Activated CD4-positive, alpha-beta memory T cell treated with anti-CD3 and anti-CD28 coated beads, Interleukin-2, amount 10 ng/mL, durations not matched to agents 7 days and 5 days (primary cell): ENCODE measurements at regions of chr3 and their contacts with region 1.

Region 1: DNA sequence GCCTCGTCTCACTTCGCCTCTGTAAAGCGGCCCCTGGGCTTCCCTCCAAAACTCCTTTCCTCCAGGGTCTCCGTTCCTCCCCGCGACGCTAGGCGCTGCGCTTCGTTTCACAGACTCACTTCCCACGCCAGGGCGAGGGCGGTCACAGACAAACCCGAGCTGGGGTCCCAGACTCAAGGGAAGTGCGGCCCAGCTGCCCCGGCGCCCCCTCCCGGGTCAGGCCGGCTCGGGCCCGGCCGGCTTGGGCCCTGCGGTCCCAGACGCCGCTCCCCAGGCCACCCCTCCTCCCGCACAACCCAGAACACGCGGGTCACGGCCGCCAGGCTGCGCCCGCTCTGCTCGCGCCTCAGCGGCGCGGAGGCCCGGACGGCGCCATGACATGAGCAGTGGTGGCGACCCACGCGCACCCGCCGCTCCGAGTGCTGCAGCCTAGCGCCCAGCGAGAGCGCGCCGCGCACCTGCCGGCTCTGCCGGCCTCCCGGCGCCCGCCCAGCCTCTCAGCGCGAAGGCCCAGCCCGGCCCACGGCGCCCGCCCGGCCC is 547 bp downstream of the NUP210 start:
- DNase-seq: peak; percentile 60
- H3K4me3 Mint-ChIP-seq: peak overlapping the region; percentile 85
- H3K27ac Mint-ChIP-seq: peak overlapping the region; percentile 97
- H3K4me1 Mint-ChIP-seq: peaks cover 59% of the 10 kb centered on the region
- H3K27me3 Mint-ChIP-seq: no peaks in the 10 kb centered on the region

Region 2: GRCh38 chr3:13274551-13275332 is 144.8 kb before region 1 on chr3:
- CTCF ChIA-PET with region 1: no interaction called
- POLR2A ChIA-PET with region 1: no interaction called
- DNase-seq: no peak
- H3K4me3 Mint-ChIP-seq: no peak overlapping the region
- H3K27ac Mint-ChIP-seq: no peak overlapping the region
- H3K4me1 Mint-ChIP-seq: no peaks in the 10 kb centered on the region
- H3K27me3 Mint-ChIP-seq: peaks cover 27% of the 10 kb centered on the region

Region 3: DNA sequence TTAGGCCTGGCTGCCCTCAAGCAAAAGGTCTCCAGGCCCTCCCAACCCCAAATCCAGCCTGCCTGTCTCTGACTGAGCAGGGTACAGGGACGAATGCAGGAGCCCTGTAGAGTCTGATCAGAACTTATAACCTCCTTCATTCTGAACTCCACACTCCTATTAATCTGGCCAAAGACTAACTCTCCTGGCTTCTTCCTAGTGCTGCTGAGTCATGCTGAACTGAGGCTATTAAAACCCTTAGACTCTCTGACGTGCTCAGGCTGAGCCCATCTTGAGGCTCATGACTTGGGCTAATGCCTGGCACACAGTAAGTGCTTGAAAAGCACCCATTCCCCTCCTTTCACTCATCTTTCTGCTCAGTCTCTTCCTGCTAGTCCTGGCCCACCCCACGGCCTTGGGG is 81.3 kb before region 1 on chr3:
- CTCF ChIA-PET with region 1: no interaction called
- POLR2A ChIA-PET with region 1: no interaction called
- DNase-seq: no peak
- H3K4me3 Mint-ChIP-seq: no peak overlapping the region
- H3K27ac Mint-ChIP-seq: peak overlapping the region; percentile 28
- H3K4me1 Mint-ChIP-seq: peaks cover 14% of the 10 kb centered on the region
- H3K27me3 Mint-ChIP-seq: no peaks in the 10 kb centered on the region

Region 4: DNA sequence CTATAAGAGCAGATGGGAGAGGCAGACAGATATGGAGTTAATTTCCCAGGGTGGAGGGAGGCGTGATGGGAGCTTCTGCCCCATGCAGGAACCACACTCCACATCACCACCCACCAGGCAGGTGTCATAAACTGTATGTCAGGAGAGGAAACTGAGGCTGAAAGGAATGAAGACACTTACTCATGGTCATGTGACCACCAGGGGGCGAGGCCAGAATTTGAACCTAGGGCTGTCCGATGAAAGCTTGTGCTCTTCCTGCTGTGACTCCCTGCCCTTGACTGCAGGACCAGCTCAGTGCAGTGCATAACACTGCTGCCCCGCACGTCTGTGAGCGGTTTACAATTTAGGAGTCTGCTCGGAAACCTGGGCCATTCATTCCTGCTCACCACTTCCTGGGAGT is 28.3 kb before region 1 on chr3:
- CTCF ChIA-PET with region 1: interaction called, 6 read pairs
- POLR2A ChIA-PET with region 1: interaction called, 18 read pairs
- DNase-seq: peak; percentile 18
- H3K4me3 Mint-ChIP-seq: no peak overlapping the region
- H3K27ac Mint-ChIP-seq: no peak overlapping the region
- H3K4me1 Mint-ChIP-seq: peaks cover 6% of the 10 kb centered on the region
- H3K27me3 Mint-ChIP-seq: no peaks in the 10 kb centered on the region

Region 5: GRCh38 chr3:13405614-13406013 is 14.0 kb before region 1 on chr3:
- CTCF ChIA-PET with region 1: interaction called, 6 read pairs
- POLR2A ChIA-PET with region 1: interaction called, 12 read pairs
- DNase-seq: no peak
- H3K4me3 Mint-ChIP-seq: no peak overlapping the region
- H3K27ac Mint-ChIP-seq: no peak overlapping the region
- H3K4me1 Mint-ChIP-seq: peaks cover 17% of the 10 kb centered on the region
- H3K27me3 Mint-ChIP-seq: no peaks in the 10 kb centered on the region